BJ (cell line): ENCODE measurements at regions of chr3 and their contacts with region 1.

Region 1: DNA sequence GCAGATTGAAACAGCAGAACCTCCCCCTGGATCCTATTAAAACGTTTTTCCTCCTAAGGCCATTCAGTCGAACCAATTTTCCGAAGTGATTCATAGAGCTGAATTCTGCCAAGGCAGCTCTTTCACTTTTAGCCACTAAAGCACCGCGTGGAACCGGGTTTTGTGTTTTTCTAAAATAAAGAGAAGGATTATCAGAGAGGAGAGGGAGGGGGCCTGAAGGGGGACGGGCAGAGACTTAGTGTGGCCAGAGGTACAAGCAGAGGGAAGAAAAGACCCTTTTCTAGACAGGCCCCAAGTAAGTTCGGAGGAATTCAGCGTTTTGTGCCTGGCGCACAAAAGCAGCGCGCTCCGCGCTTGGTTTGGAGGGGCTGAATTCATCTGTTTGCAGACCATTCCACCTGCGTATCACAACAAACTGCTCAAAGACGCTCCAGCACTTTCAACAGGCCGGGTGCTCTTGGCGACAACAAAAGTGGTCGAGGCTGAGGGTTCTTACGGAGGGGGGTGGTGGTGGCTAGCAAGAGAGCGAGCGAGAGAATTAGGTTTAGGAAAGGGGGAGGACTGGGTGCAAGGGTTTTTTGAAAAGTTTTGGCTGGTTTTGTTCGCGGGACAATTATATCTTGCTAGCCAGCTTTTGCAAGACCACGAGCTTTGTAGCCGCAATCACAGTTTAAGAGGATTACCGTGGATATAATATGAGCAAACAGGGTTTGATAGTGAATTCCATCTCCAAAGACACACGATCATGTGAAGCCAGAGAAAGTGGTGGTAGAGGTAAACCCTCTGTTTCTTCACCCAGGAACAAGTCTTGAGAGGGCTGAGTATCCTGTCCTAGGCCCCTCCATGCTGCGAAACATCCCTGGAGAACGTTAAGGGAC is 1.2 kb upstream of the FEZF2 start:
- DNase-seq: no peak
- H3K4me3 ChIP-seq: peak overlapping the region; percentile 4; the same call in 1 of the 2 replicates
- H3K27me3 ChIP-seq: peaks cover 62% of the 10 kb centered on the region
- CTCF ChIP-seq: no peak

Region 2: DNA sequence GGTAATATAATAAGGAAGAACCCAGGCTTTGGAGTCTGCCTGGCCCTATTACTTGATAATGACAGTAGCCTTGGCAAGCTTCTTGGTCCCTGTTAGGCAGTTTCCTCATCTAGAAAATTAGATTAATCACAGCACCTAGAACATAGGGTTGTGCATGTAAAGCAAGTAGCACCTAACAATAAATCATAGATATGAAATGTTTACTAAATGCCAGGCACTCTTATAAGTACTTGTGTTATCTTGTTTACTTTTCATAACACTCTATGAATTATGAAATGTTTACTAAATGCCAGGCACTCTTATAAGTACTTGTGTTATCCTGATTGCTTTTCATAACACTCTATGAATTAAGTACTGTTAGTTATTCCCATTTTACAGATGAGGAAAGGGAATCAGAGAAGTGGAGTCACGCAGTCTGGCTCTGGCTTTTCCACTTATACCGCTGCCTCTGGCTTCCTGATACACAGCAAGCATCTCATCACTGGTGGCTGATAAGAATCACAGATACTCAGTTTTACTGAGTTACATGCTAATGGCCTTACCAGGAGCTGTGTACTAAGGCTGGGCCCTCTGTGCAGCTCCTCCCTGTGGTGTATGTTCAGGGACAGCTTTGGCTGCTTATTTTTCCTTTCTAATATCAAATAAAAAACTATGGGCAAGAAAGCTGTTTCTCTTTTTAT is 124.6 kb before region 1 on chr3:
- CTCF ChIA-PET with region 1: no interaction called
- POLR2A ChIA-PET with region 1: interaction called, 10 read pairs
- DNase-seq: no peak
- H3K4me3 ChIP-seq: no peak overlapping the region
- H3K27me3 ChIP-seq: no peaks in the 10 kb centered on the region
- CTCF ChIP-seq: no peak

Region 3: GRCh38 chr3:62387251-62387650 is 12.7 kb after region 1 on chr3:
- CTCF ChIA-PET with region 1: no interaction called
- POLR2A ChIA-PET with region 1: no interaction called
- DNase-seq: no peak
- H3K4me3 ChIP-seq: no peak overlapping the region
- H3K27me3 ChIP-seq: peaks cover 3% of the 10 kb centered on the region
- CTCF ChIP-seq: no peak